ENCODE measurements at regions of chr2 and their contacts with region 1.

Region 1: DNA sequence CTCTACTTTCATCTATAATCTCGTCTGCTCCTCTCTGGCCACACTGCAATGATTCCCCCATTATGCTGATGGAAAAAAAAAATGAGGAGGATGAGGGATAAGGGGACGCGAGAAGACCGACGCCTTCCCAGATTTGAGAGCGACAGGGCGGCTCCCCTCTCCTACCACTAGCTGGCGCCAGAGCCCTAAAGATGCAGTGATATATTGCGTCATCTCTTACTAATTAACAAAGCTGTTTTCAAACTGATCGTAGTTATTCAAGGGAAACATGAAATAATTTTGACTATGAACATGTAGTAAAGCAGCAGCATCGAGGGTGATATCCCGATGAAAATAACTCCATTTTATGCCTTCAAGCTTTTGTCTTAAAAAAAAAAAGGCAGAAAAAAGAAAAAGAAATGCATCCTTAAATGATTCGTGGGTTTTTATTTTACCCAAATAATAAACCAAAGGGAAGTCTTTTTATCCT is 48.0 kb upstream of the HNRNPA3 start:
- DNase-seq: peak; percentile 90
- H3K4me3 Mint-ChIP-seq: no peak overlapping the region
- H3K27ac Mint-ChIP-seq: no peak overlapping the region
- H3K4me1 Mint-ChIP-seq: peaks cover 21% of the 10 kb centered on the region
- H3K27me3 Mint-ChIP-seq: no peaks in the 10 kb centered on the region

Region 2: GRCh38 chr2:177175917-177176668 is 11.5 kb after region 1 on chr2:
- CTCF ChIA-PET with region 1: interaction called, 10 read pairs
- intact Hi-C with region 1: no loop called
- DNase-seq: no peak
- H3K4me3 Mint-ChIP-seq: no peak overlapping the region
- H3K27ac Mint-ChIP-seq: no peak overlapping the region
- H3K4me1 Mint-ChIP-seq: peaks cover 7% of the 10 kb centered on the region
- H3K27me3 Mint-ChIP-seq: no peaks in the 10 kb centered on the region

Region 3: GRCh38 chr2:177229448-177230242 is 65.0 kb after region 1 on chr2:
- CTCF ChIA-PET with region 1: interaction called, 14 read pairs
- intact Hi-C with region 1: no loop called
- DNase-seq: no peak
- H3K4me3 Mint-ChIP-seq: no peak overlapping the region
- H3K27ac Mint-ChIP-seq: peak overlapping the region; percentile 80
- H3K4me1 Mint-ChIP-seq: peaks cover 41% of the 10 kb centered on the region
- H3K27me3 Mint-ChIP-seq: no peaks in the 10 kb centered on the region

Region 4: DNA sequence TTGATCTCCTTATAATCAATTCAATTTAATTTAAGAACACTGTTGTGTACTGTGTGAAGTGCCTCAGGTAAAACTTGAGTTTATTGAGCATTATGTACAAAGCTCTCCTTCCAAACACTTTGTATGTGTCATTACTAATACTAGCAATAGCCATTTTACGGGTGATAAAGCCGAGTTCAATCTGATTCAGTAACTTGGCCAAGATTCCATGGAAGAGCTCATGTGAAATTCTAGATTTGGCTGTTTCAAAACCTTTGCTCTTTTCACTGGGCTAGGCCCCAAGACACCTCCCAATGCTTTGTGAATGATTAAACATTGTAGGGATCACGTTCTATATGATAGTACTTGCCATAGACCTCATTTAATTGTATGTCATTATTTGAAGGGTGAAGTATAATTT is 108.8 kb after region 1 on chr2:
- CTCF ChIA-PET with region 1: interaction called, 12 read pairs
- intact Hi-C with region 1: no loop called
- DNase-seq: no peak
- H3K4me3 Mint-ChIP-seq: no peak overlapping the region
- H3K27ac Mint-ChIP-seq: no peak overlapping the region
- H3K4me1 Mint-ChIP-seq: peaks cover 23% of the 10 kb centered on the region
- H3K27me3 Mint-ChIP-seq: no peaks in the 10 kb centered on the region

Region 5: DNA sequence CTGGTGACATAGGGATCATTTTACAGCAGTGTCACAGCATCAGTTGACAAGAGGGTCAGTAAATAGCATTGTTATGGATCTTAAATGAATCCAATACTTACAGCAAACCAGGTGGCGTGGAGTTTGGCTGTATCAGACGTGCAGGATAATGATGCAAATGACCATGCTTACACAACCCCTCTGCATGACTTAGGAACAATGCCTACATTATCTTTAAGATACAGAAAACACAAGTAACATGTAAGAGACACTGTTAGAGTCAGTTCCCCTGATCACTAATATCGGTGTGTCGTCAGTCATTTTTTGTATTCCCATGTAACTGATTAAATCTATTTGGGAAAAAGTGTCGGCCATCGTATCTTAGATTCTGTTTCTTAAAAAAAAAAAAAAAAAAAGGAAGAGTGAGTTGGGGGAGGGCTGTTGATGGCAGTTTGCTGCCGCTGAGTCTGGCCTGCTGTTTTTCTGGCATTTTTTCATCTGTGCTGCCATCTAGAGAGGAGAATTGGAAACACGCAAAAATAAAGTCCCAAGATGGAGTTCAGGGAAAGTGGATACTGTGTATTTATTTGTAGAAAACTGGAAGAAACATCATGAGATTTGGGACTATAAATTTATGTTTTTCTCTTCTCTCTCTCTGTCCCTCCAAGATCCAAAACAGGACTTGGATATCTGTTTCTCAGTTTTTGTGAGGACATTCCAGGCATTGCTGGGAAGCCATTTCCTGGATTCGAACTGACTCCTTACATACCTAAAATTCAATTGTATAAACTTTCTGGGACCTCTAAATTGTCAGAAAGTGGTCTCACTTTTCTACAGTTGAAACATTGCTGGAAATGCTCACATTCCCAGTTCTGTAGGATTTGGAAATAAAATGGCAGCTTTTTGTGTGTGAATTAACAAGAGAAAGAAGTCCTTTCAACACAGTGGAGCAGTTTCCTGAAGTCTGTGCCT is 167.7 kb after region 1 on chr2:
- CTCF ChIA-PET with region 1: interaction called, 64 read pairs
- intact Hi-C with region 1: loop called (anchors 1 kb)
- DNase-seq: peak; percentile 58
- H3K4me3 Mint-ChIP-seq: no peak overlapping the region
- H3K27ac Mint-ChIP-seq: no peak overlapping the region
- H3K4me1 Mint-ChIP-seq: peaks cover 16% of the 10 kb centered on the region
- H3K27me3 Mint-ChIP-seq: no peaks in the 10 kb centered on the region

Region 6: GRCh38 chr2:177604271-177605065 is 439.9 kb after region 1 on chr2:
- CTCF ChIA-PET with region 1: interaction called, 6 read pairs
- intact Hi-C with region 1: loop called (anchors 1 kb)
- DNase-seq: no peak
- H3K4me3 Mint-ChIP-seq: no peak overlapping the region
- H3K27ac Mint-ChIP-seq: no peak overlapping the region
- H3K4me1 Mint-ChIP-seq: no peaks in the 10 kb centered on the region
- H3K27me3 Mint-ChIP-seq: peaks cover 3% of the 10 kb centered on the region

Region 7: GRCh38 chr2:177763532-177764265 is 599.1 kb after region 1 on chr2:
- CTCF ChIA-PET with region 1: interaction called, 7 read pairs
- intact Hi-C with region 1: loop called (anchors 1 kb)
- DNase-seq: peak; percentile 88
- H3K4me3 Mint-ChIP-seq: no peak overlapping the region
- H3K27ac Mint-ChIP-seq: no peak overlapping the region
- H3K4me1 Mint-ChIP-seq: peaks cover 3% of the 10 kb centered on the region
- H3K27me3 Mint-ChIP-seq: peaks cover 12% of the 10 kb centered on the region

Measured in activated naive CD4-positive, alpha-beta T cell treated with anti-CD3 and anti-CD28 coated beads for 36 hours (primary cell).